Head of caudate nucleus (tissue), 42 donors: ENCODE measurements at regions of chr10 and their contacts with region 1.

Region 1: DNA sequence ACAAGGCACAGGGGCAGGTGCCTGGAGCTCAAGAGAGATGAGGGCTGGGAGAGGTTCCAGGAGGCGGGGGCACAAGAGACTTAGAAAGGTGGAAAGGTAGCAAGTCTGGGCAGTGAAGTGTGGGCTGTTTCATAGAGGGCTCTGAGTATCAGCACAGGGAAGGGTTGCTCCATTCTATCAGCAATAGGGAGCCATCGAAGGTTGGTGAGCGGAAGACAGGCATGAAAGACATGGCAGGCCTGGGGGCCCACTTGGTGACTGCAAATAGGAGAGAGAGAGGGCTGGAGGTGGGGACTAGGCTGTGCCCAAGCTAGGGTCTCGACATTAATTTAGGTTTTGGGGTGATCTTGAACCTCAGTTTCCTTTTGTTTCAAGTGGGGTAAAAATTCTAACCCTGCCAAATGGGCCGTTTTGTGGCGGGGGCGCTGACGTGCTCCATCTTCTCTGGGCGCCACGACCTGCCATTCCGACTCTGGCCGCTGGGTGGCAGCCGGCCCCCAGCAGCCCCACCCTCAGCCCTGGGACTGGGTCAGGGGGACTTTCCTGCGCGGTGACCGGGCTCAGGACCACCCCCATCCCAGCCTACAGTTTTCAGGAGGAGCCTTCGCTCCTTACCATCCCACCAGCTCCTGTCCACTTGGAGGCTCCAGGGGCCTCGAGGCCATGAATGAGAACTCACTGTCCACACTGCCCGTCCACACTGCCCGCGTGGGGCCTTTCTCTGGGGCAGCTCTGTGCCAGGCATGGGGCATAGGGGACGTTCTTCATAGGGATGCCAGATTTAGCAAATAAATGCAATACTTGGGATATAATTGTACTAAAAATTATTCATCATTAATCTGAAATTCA is 37.2 kb upstream of the PCBD1 start:
- DNase-seq: peak in 40 of 42 donors; percentile 7 to 84 (median 56)

Region 2: GRCh38 chr10:70956029-70956759 is 30.6 kb after region 1 on chr10:
- intact Hi-C with region 1: no loop called
- DNase-seq: no peak

Region 3: DNA sequence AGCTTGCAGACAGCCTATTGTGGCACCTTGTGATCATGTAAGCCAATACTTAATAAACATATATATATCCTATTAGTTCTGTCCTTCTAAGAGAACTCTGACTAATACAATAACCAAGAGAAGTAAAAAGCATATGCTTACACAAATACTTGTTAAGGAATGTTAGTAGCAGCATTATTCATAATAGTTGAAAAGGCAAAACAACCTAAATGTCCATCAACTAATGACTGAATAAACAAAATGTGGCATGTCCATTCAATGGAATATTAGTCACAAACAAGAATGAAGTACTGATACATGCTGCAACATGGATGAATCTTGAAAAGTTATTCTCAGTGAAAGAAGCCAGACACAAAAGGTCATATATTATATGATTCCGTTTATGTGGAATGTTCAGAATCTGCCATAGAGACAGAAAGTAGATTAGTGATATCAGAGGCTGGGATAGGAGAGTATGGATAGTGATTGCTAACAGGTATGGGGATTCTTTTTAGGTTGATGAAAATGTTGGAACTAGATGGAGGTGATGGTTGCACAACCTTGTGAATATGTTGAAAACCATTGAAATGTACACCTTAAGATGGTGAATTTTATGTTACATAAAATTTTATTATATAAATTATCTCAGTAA is 174.2 kb after region 1 on chr10:
- intact Hi-C with region 1: no loop called
- DNase-seq: no peak

Region 4: DNA sequence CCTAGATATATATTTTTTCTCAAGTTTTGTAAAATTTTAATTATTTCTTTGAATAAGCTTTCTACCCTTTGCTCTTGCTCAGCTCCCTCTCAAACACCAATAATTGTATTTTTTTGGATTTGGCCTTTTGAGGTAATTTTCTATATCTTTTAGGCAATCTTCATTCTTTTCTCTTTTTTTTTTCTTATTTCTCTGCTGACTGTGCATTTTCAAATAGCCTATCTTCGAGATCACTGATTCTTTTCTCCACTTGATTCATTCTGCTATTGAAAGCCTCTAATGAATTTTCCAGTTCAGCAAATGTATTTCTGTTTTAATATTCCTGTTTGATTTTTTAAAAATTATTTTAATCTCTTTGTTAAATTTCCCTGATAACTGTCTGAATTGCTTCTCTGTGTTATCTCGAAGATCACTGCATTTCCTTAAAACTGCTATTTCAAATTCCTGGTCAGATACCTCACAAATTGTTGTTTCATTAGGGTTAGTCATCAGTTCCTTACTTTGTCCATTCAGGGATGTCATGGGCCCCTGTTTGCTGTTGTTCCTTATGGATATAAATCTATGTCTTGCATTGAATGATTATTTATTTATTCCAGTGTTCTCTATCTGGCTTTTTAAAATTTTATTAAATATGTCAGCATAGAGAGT is 186.7 kb after region 1 on chr10:
- intact Hi-C with region 1: no loop called
- DNase-seq: no peak

Region 5: GRCh38 chr10:71212318-71213126 is 286.9 kb after region 1 on chr10 and contains the start of gene UNC5B:
- intact Hi-C with region 1: loop called (anchors 10 kb)
- DNase-seq: peak; percentile 73 to 97 (median 94)

Region 6: GRCh38 chr10:71285180-71285545 is 359.6 kb after region 1 on chr10:
- intact Hi-C with region 1: loop called (anchors 5 kb)
- DNase-seq: peak in 41 of 42 donors; percentile 47 to 87 (median 70)